ENCODE measurements at regions of chr22 and their contacts with region 1.

Region 1: DNA sequence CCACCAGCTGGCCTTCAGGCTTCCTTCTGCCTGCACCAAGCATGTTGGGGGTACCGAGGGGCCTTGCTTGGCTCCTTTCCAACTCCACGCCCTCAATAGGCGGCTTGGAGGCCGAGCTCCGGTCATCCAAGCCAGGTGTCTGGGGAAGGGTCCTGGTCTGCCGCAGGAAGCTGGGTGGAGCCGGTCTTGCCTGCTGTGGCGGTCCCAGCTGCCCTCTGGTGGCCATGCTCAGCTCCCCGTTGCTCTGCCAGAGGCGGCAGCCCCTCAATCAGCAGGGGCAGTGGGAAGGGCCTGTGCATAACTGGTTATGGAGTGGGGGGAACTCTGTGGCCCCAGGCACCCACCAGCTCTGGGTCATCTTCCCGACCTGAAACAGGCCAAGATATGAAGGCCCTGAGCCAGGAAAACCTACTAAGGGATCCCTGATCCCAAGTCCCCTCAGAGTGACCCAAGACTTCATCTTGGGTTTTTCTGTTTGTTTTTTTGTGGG is 3.2 kb downstream of the ARVCF start:
- DNase-seq: peak; percentile 63
- H3K4me3 ChIP-seq: no peak overlapping the region
- H3K27ac ChIP-seq: no peak overlapping the region
- H3K4me1 ChIP-seq: peaks cover 9% of the 10 kb centered on the region
- H3K27me3 ChIP-seq: no peaks in the 10 kb centered on the region
- CTCF ChIP-seq: peak; percentile 61 to 67 (median 63)
- POLR2A ChIP-seq: no peak

Region 2: GRCh38 chr22:19970479-19971275 is 42.8 kb before region 1 on chr22:
- intact Hi-C with region 1: loop called (anchors 5 kb)
- DNase-seq: peak; percentile 56
- H3K4me3 ChIP-seq: no peak overlapping the region
- H3K27ac ChIP-seq: no peak overlapping the region
- H3K4me1 ChIP-seq: no peaks in the 10 kb centered on the region
- H3K27me3 ChIP-seq: no peaks in the 10 kb centered on the region
- CTCF ChIP-seq: peak; percentile 55 to 89 (median 75)
- POLR2A ChIP-seq: no peak

Region 3: DNA sequence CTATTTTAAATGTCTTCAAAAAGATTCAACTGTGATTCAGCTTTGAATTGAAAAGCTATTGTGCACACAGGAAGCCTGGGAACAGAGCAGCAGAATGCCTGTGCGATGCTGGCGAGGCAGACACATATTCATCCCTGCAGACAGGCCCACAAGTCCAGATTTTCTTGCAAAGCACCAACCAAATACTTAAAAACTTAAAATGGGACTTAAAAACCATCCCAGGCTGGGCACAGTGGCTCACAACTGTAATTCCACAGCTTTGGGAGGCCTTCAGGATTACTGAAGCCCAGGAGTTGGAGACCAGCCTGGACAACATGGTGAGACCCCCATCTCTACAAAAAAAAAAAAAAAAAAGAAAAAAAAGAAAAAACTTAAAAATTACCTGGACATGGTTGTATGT is 637.9 kb after region 1 on chr22:
- intact Hi-C with region 1: no loop called
- DNase-seq: peak; percentile 1
- H3K4me3 ChIP-seq: no peak overlapping the region
- H3K27ac ChIP-seq: no peak overlapping the region
- H3K4me1 ChIP-seq: no peaks in the 10 kb centered on the region
- H3K27me3 ChIP-seq: no peaks in the 10 kb centered on the region
- CTCF ChIP-seq: no peak
- POLR2A ChIP-seq: no peak

Measured in testis (tissue), 5 donors.